PC-9 (cell line): ENCODE measurements at regions of chr16 and their contacts with region 1.

Region 1: DNA sequence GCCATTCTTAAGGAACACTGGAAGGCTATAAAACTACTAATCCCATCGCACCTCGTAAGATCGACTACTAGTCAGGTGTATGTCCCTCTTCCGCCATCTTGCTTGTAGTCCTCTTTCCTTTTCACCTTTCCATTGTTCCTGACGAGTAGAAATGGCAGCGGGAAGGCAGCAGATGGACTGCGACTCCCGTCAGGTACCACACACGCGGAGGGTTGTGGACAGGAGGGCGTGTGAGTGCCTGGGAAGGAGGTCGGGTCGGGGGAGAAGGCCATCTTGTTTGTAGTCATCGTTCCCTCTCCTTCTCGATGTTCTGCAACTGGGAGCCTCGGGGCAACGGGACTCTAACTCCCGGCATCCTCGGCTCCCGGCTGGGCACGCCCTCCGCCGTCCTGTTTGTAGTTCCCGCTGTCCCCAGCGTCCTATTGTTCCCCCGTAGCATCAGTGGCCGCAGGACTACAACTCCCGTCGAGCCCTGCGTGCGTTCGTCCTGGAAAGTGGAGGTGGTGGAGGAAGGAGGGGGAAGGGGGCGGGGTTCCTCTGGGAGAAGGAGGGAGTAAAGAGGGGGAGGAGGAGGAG is 324 bp upstream of the FBXL19 start:
- DNase-seq: peak; percentile 98 to 100
- H3K4me3 ChIP-seq: peak overlapping the region; percentile 83
- H3K27ac ChIP-seq: peak overlapping the region; percentile 90
- H3K4me1 ChIP-seq: no peaks in the 10 kb centered on the region; the same call in 1 of the 2 replicates
- H3K27me3 ChIP-seq: no peaks in the 10 kb centered on the region
- CTCF ChIP-seq: no peak

Region 2: DNA sequence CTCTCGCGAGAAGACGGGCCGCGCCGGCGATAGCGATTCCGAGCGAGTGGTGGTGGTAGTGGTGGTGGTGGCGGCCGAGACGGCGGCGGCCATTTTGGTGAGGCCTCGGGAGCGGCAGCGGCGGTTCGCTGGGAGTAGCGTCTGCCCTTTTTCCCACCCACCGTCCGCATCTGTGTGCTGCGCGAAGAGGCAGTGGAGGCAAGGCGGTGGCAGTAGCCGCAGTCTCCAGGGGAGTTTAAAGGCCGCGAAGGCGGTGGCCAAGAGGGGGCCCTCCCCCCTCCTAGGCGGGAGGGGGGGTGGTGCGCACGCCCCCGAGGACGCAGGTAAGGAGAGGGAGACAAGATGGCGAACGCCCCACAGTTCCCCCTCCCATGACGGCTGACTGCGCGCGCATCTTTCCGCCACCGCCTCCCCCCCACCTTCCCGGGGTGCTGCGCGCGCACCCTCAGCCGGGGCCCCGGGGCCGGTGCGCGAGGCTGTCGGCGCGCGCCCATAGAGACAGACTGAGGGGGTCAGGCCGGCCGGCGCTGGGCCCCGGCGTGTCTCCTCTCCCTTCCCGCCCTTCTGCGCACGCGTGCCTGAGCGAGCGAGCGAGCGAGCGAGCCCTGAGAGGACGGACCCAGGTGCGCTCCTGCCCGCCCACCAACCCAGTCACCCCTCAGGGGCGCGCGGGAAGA is 224.8 kb before region 1 on chr16:
- CTCF ChIA-PET with region 1: no interaction called
- POLR2A ChIA-PET with region 1: no interaction called
- intact Hi-C with region 1: loop called (anchors 1 kb)
- DNase-seq: peak; percentile 91 to 99
- H3K4me3 ChIP-seq: peak overlapping the region; percentile 96
- H3K27ac ChIP-seq: peak overlapping the region; percentile 95
- H3K4me1 ChIP-seq: peaks cover 22% of the 10 kb centered on the region
- H3K27me3 ChIP-seq: no peaks in the 10 kb centered on the region
- CTCF ChIP-seq: no peak

Region 3: DNA sequence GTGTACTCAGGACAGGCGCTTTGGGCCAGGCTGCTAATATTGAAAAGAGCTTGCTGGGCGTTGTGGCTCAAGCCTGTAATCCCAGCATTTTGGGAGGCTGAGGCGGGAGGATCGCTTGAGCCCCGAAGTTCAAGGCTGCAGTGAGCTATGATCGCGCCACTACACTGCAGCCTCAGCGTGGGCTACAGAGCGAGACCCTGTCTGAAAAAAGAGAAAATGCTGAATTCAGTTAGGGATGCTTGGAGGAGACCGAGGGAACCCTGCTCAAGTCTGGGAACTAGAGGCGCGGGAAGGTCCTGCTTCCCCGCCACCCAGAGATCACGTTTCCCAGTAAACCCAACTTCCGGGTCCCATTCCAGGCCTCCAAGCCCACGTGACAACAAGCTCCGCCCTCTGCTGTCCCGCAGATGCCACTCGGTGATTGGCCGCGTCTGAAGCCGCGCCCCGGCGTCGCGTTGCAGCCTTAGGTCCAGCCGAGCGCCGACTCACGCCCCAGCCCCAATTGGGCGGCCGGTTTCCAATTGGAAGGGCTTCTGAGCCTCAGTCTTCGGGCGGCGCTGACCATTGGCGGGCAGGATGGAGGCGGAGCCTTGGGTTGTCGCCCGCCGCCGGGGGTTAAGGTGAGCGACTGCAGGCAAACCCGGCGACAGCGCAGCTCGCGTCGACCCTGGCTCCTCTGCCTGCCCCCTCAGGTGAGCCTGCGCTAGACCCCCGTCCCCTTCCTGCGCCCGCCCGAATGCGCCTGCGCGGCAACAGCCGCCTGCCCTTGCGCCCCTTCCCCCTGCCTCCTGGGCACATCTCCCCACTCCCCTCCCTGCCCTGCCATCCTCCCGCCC is 175.0 kb before region 1 on chr16 and contains the start of gene PHKG2:
- CTCF ChIA-PET with region 1: no interaction called
- POLR2A ChIA-PET with region 1: no interaction called
- intact Hi-C with region 1: loop called (anchors 2 kb)
- DNase-seq: peak; percentile 98 to 100
- H3K4me3 ChIP-seq: peak within 1 kb of the TSS; percentile 75
- H3K27ac ChIP-seq: peak within 1 kb of the TSS; percentile 53
- H3K4me1 ChIP-seq: peaks cover 13% of the 10 kb centered on the region
- H3K27me3 ChIP-seq: no peaks in the 10 kb centered on the region
- CTCF ChIP-seq: no peak
- total RNA-seq, gene PHKG2: 66.1 and 67.3 TPM in 2 replicates

Region 4: DNA sequence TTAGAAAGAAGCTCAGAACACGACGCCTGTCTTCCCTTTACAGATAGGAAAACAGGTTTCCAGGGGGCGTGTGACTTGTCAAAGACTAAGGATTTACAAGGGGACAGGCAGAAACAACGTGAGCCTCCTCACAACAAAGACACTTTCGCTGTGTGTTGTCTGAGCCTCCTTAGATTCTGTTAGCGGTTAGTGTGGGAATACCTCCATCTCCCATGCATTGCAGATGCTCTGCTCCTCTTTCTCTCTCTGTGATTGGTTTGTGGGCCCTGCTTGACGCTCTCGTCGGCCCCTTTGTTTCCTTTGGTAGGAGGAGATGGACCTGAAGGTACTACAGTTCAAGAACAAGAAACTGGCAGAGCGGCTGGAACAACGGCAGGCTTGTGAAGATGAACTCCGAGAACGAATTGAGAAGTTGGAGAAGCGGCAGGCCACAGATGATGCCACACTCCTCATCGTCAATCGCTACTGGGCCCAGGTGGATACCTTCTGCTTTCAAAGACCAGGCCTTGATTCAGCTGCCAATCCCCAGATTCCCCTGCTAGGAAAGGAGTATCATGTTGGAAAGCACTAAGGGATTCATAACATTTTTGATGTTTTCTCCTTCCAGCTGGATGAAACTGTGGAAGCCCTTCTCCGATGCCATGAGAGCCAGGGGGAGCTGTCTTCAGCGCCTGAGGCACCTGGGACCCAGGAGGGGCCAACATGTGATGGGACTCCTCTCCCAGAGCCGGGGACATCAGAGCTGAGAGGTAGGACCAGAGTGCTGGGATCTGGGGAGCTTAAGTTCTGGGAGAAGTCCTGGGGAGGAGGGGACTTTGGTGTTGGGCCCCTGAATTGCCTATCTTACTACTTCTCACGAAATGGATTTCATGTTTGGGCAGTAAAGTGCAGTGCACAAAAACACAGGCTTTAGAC is 160.0 kb before region 1 on chr16:
- CTCF ChIA-PET with region 1: no interaction called
- POLR2A ChIA-PET with region 1: no interaction called
- intact Hi-C with region 1: no loop called
- DNase-seq: no peak
- H3K4me3 ChIP-seq: peak overlapping the region; percentile 83
- H3K27ac ChIP-seq: peak overlapping the region; percentile 2; the same call in 1 of the 2 replicates
- H3K4me1 ChIP-seq: peaks cover 24% of the 10 kb centered on the region
- H3K27me3 ChIP-seq: no peaks in the 10 kb centered on the region
- CTCF ChIP-seq: no peak

Region 5: DNA sequence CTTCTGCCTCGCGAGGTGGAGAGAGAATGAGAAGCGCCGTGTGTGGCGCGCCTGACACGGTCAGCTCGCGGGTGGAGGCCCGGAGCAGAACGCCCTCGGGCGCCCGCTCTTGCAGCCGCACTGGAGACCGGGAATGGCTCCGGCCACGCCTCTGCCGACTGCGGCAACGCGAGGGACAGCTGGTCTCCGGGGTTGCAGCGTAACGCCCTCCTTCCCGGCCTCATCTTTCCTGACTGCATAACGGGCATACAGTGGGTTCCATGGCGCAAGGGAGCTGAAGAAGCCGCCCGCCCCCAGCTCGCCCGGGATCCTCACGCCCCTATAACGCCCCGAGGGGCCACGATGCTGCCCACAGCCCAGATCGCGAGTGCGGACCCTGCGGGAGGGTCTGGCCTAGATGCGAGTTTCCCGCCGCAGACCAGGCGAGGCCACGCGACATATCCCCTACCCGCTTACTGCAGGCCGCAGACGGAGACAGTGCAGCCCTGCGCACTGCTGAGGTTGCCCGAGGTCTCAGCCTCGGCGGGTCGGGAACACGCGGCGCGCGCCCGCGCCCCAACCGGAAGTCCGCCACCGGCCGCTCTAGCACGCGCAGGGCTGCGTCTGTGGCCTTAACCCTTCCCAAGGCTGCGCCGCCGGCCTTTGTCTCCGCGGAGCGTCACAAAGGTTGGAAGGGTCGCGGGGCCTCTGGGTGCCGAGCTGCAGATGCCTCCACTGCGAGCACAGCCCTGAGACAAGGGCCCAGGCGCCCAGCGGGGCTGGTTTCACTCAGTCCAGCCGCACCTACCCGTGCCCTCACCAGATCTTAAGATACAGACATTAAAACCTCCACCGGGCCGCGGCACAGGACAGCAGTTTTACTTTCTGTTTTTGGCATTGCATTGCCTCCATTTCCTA is 48.0 kb before region 1 on chr16:
- CTCF ChIA-PET with region 1: no interaction called
- POLR2A ChIA-PET with region 1: no interaction called
- intact Hi-C with region 1: loop called (anchors 2 kb)
- DNase-seq: peak; percentile 75 to 94
- H3K4me3 ChIP-seq: peak overlapping the region; percentile 97
- H3K27ac ChIP-seq: peak overlapping the region; percentile 48
- H3K4me1 ChIP-seq: peaks cover 18% of the 10 kb centered on the region
- H3K27me3 ChIP-seq: no peaks in the 10 kb centered on the region
- CTCF ChIP-seq: no peak

Region 6: GRCh38 chr16:30941600-30942425 is 18.8 kb after region 1 on chr16:
- CTCF ChIA-PET with region 1: interaction called, 12 read pairs
- POLR2A ChIA-PET with region 1: interaction called, 14 read pairs
- intact Hi-C with region 1: no loop called
- DNase-seq: peak; percentile 63 to 87
- H3K4me3 ChIP-seq: no peak overlapping the region
- H3K27ac ChIP-seq: no peak overlapping the region
- H3K4me1 ChIP-seq: peaks cover 6% of the 10 kb centered on the region; the same call in 1 of the 2 replicates
- H3K27me3 ChIP-seq: no peaks in the 10 kb centered on the region
- CTCF ChIP-seq: peak; percentile 98

Region 7: GRCh38 chr16:30957456-30958174 is 34.6 kb after region 1 on chr16 and contains the start of gene SETD1A:
- CTCF ChIA-PET with region 1: no interaction called
- POLR2A ChIA-PET with region 1: interaction called, 6 read pairs
- intact Hi-C with region 1: loop called (anchors 1 kb)
- DNase-seq: peak; percentile 86 to 96
- H3K4me3 ChIP-seq: peak within 1 kb of the TSS; percentile 97
- H3K27ac ChIP-seq: peak within 1 kb of the TSS; percentile 82
- H3K4me1 ChIP-seq: peaks cover 9% of the 10 kb centered on the region
- H3K27me3 ChIP-seq: no peaks in the 10 kb centered on the region
- CTCF ChIP-seq: no peak
- total RNA-seq, gene SETD1A: 29.6 and 33.2 TPM in 2 replicates

Region 8: GRCh38 chr16:30997000-30997886 is 74.2 kb after region 1 on chr16:
- CTCF ChIA-PET with region 1: no interaction called
- POLR2A ChIA-PET with region 1: no interaction called
- intact Hi-C with region 1: no loop called
- DNase-seq: peak; percentile 50 to 84
- H3K4me3 ChIP-seq: peak overlapping the region; percentile 67
- H3K27ac ChIP-seq: peak overlapping the region; percentile 80
- H3K4me1 ChIP-seq: peaks cover 24% of the 10 kb centered on the region
- H3K27me3 ChIP-seq: no peaks in the 10 kb centered on the region
- CTCF ChIP-seq: no peak